Activated CD8-positive, alpha-beta T cell treated with anti-CD3 and anti-CD28 coated beads, Interleukin-2, amount 10 ng/mL, durations not matched to agents 7 days and 5 days (primary cell): ENCODE measurements at regions of chr1 and their contacts with region 1.

Region 1: GRCh38 chr1:160046494-160047110 is 14.8 kb upstream of the PIGM start:
- DNase-seq: peak; percentile 61
- ATAC-seq: peak; percentile 96
- H3K4me3 Mint-ChIP-seq: peak overlapping the region; percentile 65
- H3K27ac Mint-ChIP-seq: peak overlapping the region; percentile 72
- H3K4me1 Mint-ChIP-seq: peaks cover 12% of the 10 kb centered on the region
- H3K27me3 Mint-ChIP-seq: peaks cover 28% of the 10 kb centered on the region

Region 2: GRCh38 chr1:160031365-160032164 is 15.0 kb before region 1 on chr1 and contains the start of gene PIGM:
- CTCF ChIA-PET with region 1: interaction called, 67 read pairs
- POLR2A ChIA-PET with region 1: no interaction called
- DNase-seq: peak; percentile 97
- ATAC-seq: peak; percentile 99
- H3K4me3 Mint-ChIP-seq: peak within 1 kb of the TSS; percentile 95
- H3K27ac Mint-ChIP-seq: peak within 1 kb of the TSS; percentile 90
- H3K4me1 Mint-ChIP-seq: peaks cover 29% of the 10 kb centered on the region
- H3K27me3 Mint-ChIP-seq: peaks cover 12% of the 10 kb centered on the region
- total RNA-seq, gene PIGM: 4.2 to 4.5 TPM

Region 3: GRCh38 chr1:160058087-160058486 is 11.5 kb after region 1 on chr1:
- CTCF ChIA-PET with region 1: interaction called, 617 read pairs
- POLR2A ChIA-PET with region 1: no interaction called
- DNase-seq: no peak
- ATAC-seq: no peak
- H3K4me3 Mint-ChIP-seq: no peak overlapping the region
- H3K27ac Mint-ChIP-seq: no peak overlapping the region
- H3K4me1 Mint-ChIP-seq: no peaks in the 10 kb centered on the region
- H3K27me3 Mint-ChIP-seq: peaks cover 37% of the 10 kb centered on the region

Region 4: DNA sequence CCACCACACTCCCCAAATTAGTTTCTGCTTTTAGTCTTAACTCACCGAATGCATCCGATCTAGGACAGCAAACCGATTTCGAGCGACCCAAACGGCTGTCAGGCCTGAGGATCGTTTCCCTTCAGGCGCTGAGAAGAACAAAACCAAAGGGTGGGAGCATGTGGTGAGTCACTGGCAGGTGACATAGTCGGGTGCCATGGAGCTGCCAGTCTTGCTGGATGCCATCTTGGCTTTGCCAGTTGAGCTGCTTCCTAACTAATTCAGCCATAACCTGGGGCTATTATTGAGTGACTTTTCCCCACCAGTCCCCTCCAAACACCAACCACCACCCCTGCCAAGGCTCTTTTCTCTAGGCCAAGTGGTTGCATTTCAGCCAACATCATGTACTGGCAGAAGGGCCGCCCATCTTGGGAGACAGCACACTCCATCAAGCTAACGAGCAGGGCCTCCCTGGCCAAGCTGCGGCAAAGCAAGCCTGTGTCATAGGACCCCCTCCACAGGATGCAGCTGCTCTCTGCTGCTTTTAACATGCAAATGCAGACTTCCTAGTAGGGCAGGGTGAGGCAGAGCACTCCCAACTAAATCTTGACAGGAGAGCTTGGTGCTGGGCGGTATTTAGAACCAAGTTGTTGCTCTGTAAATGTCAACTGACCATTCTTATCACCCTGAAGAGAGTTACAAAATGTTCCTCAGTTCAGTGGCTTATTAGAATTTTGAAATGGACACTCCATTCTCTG is 260.7 kb after region 1 on chr1:
- CTCF ChIA-PET with region 1: no interaction called
- POLR2A ChIA-PET with region 1: no interaction called
- DNase-seq: no peak
- ATAC-seq: no peak
- H3K4me3 Mint-ChIP-seq: no peak overlapping the region
- H3K27ac Mint-ChIP-seq: no peak overlapping the region
- H3K4me1 Mint-ChIP-seq: no peaks in the 10 kb centered on the region
- H3K27me3 Mint-ChIP-seq: no peaks in the 10 kb centered on the region